Right ventricle myocardium inferior (tissue), 1 donor: ENCODE measurements at regions of chr1 and their contacts with region 1.

Region 1: DNA sequence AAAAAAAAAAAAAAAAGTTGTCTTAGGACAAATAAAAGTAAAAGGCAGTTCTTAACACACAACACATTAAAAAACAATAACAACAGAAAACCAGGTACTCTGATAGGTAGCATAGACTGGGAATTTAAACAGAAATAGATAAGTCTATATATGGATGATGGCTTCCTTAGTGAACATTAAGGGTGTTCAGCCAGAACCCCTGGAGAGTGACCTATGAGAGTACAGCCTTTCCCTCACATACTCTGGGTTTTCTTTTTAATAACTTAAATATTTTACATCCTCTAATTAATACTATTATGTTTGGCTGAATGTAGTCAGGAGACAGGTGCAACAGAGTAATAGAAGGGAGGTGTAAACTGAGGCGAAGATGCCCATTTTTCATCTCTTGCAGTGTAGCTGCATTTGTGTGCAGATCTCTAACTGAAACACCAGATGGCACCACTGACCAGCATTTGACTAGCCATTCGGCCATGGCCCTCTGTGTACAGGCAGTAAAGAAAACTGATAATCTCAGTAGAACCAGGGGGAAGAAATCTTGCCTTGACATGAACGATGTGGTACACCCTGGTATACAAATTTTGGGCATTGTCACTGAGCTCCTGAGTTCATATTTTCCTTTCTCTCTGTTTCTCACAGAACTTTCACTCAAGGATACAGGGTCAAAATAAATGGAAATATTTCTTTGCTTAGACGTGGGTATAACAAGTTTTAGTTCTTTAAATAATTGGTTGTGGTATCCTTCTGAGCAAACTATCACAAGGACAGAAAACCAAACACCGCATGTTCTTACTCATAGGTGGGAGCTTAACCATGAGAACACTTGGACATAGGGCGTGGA is 7.6 kb downstream of the TTF2 start:
- DNase-seq: no peak
- ATAC-seq: peak; percentile 90

Region 2: GRCh38 chr1:117128323-117129079 is 60.7 kb after region 1 on chr1:
- intact Hi-C with region 1: loop called (anchors 2 kb)
- DNase-seq: no peak
- ATAC-seq: peak; percentile 82

Region 3: GRCh38 chr1:117237696-117238381 is 170.1 kb after region 1 on chr1:
- intact Hi-C with region 1: no loop called
- DNase-seq: no peak
- ATAC-seq: no peak

Region 4: DNA sequence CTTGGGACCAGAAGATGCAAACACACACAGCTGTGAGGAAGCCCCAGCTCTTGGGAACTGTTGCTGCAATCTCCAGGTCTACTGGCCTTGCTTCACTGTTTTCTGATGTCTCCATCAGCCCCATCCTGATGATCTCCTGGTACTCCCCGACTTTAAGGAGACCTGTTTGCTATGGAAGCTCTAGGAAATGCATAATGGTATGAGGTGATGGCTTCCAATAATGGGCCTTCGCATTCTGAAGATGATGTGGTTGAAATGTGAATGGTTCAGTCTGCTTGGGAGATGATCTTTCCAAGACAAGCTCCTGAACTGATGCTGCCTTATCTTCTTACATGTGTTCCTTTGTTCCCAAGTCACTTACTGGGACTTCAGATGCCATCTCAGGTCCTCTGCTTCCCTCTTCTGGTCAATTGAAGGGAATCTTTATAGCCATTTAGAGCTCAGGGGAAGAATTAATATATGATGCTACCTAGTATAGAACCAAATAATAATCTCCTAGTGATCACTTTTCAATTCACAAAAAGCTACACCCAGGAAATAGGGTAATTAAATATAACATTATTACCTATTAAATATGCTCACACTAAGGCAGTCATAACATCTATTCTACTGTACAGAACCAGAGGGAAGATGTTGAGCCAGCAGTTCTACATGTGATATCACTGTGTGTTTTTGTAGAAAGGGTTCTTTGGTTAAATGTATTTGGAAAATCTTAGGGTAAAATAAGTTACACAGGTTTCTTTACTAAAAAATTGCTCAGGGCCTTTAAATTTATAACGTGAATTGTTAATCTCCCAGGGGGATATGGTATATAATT is 216.9 kb after region 1 on chr1:
- intact Hi-C with region 1: loop called (anchors 1 kb)
- DNase-seq: no peak
- ATAC-seq: peak; percentile 69